H1 (cell line): ENCODE measurements at regions of chr12 and their contacts with region 1.

Region 1: GRCh38 chr12:107884769-107885694 is 110.5 kb downstream of the ASCL4 start:
- DNase-seq: peak in 1 of 2 experiments; percentile 63
- H3K4me3 ChIP-seq: no peak overlapping the region
- H3K27ac ChIP-seq: no peak overlapping the region
- H3K4me1 ChIP-seq: no peaks in the 10 kb centered on the region
- H3K27me3 ChIP-seq: peaks cover 0 to 2% (median 0%) of the 10 kb centered on the region in 4 experiments; a peak in 1 of 7 replicates
- CTCF ChIP-seq: peak; percentile 65 to 80 (median 75)
- EP300 ChIP-seq: no peak
- POLR2A ChIP-seq: no peak
- RAD21 ChIP-seq: peak; percentile 88

Region 2: GRCh38 chr12:107679336-107679735 is 205.7 kb before region 1 on chr12:
- CTCF ChIA-PET with region 1: interaction called, 20 read pairs
- POLR2A ChIA-PET with region 1: no interaction called
- DNase-seq: no peak
- H3K4me3 ChIP-seq: no peak overlapping the region
- H3K27ac ChIP-seq: no peak overlapping the region
- H3K4me1 ChIP-seq: no peaks in the 10 kb centered on the region
- H3K27me3 ChIP-seq: 0 out of 7 replicates have a peak, but pooled peaks cover 0 to 3% (median 0%) of the 10 kb centered on the region in 4 experiments
- CTCF ChIP-seq: no peak
- EP300 ChIP-seq: no peak
- POLR2A ChIP-seq: no peak
- RAD21 ChIP-seq: no peak

Region 3: DNA sequence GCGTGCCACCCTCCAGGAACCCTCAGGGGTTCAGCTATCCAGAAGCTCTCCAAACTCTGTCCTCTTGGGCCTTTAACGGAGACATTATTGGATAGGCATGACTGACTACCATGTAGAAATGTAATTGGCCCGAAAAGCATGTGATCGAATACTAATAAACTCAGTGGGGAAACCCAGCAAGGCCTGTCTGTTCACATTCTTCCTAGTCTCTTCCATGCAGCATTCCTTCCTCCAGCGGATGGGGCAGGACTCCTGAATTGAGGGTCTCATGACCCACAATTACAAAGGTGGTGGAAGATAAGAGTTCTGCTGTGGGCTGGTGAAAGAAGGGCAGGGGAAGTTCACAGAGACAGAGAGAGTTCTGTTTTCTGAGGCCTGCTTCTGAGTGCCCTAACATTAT is 117.6 kb before region 1 on chr12:
- CTCF ChIA-PET with region 1: interaction called, 22 read pairs
- POLR2A ChIA-PET with region 1: no interaction called
- DNase-seq: no peak
- H3K4me3 ChIP-seq: no peak overlapping the region
- H3K27ac ChIP-seq: no peak overlapping the region
- H3K4me1 ChIP-seq: no peaks in the 10 kb centered on the region
- H3K27me3 ChIP-seq: no peaks in the 10 kb centered on the region
- CTCF ChIP-seq: no peak
- EP300 ChIP-seq: no peak
- POLR2A ChIP-seq: no peak
- RAD21 ChIP-seq: no peak

Region 4: DNA sequence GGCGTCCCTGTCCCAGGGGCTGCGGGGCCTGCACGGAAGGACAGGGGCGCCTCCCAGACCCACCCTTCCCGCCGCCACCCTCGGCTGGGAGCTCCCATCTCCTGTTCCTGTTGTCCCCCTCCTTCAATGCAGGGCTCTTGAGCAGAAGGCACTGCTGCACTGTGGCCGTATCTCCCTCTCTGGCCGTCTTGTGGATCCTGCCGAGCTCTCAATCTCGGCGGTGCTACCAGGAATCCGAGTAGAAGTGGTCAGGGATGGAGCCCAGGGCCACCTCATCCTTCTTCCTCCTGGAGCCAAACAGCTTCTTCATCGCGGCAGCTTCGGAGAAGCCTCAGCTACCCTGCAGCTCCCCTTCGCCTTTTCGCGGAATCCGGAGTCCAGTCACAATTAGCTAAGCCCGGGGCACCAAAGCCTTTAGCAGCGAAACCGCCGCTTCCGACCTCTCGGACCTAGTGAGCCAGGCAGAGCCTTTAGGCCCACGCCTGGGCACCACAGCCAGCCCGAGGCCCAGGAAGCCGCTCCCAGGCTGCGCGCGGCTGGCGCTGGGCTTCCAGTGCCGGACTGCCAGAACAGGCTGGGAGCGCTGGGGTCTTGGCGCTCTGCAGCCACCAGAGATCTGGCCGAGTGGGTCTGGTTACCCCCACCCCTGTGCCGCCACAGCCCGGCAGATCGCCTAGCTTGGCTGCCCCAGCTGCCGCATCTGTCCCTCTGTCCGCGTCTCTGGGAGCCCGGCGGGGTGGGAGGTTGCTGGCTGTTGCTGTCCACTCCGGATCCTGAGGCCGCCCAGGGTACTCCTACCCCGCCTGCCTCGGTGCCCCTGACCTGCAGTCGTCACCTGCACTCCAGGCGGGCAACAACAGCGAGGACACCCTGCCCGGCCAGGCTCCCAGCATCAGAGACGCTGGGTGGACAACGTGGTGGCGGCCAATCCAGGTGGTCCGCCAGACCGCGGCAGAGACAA is 41.4 kb before region 1 on chr12:
- CTCF ChIA-PET with region 1: interaction called, 10 read pairs
- POLR2A ChIA-PET with region 1: no interaction called
- DNase-seq: peak in 1 of 2 experiments; percentile 72
- H3K4me3 ChIP-seq: peak overlapping the region; percentile 29 to 64 (median 58)
- H3K27ac ChIP-seq: no peak overlapping the region
- H3K4me1 ChIP-seq: peaks cover 0 to 12% (median 6%) of the 10 kb centered on the region in 4 experiments; a peak in 5 of 7 replicates
- H3K27me3 ChIP-seq: peaks cover 25 to 55% (median 42%) of the 10 kb centered on the region in 4 experiments
- CTCF ChIP-seq: no peak
- EP300 ChIP-seq: no peak
- POLR2A ChIP-seq: no peak
- RAD21 ChIP-seq: no peak; a peak in 1 of 4 replicates

Region 5: GRCh38 chr12:107873223-107873622 is 11.8 kb before region 1 on chr12:
- CTCF ChIA-PET with region 1: interaction called, 18 read pairs
- POLR2A ChIA-PET with region 1: interaction called, 5 read pairs
- DNase-seq: no peak
- H3K4me3 ChIP-seq: no peak overlapping the region
- H3K27ac ChIP-seq: no peak overlapping the region
- H3K4me1 ChIP-seq: no peaks in the 10 kb centered on the region
- H3K27me3 ChIP-seq: peaks cover 0 to 3% (median 0%) of the 10 kb centered on the region in 4 experiments; a peak in 2 of 7 replicates
- CTCF ChIP-seq: peak; percentile 33 to 48 (median 41); a peak in 3 of 4 replicates
- EP300 ChIP-seq: no peak
- POLR2A ChIP-seq: no peak
- RAD21 ChIP-seq: peak; percentile 37 to 53